ENCODE measurements at regions of chr20 and their contacts with region 1.

Region 1: DNA sequence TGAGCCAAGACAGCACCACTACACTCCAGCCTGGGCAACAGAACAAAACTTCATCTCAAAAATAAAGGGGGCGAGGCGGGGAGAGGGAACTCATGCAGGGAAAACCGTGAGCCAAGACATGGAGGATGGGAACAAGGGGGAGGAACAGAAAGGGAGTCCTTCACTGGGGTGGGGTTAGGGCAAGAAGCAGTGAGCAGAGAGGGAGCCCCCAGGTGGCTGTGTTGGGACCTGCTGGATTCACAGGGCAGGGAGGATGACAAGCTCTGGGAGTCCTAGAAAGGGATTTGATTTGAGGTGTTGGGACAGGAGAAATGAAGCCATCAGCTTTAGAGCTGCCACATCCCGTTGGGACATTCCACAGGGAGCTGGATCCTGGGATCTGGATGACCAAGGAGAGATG is 90.6 kb upstream of the TOP1 start:
- DNase-seq: no peak
- ATAC-seq: no peak
- H3K4me3 ChIP-seq: no peak overlapping the region
- H3K27ac ChIP-seq: no peak overlapping the region
- H3K4me1 ChIP-seq: no peaks in the 10 kb centered on the region
- H3K27me3 ChIP-seq: no peaks in the 10 kb centered on the region
- CTCF ChIP-seq: no peak
- POLR2A ChIP-seq: no peak

Region 2: DNA sequence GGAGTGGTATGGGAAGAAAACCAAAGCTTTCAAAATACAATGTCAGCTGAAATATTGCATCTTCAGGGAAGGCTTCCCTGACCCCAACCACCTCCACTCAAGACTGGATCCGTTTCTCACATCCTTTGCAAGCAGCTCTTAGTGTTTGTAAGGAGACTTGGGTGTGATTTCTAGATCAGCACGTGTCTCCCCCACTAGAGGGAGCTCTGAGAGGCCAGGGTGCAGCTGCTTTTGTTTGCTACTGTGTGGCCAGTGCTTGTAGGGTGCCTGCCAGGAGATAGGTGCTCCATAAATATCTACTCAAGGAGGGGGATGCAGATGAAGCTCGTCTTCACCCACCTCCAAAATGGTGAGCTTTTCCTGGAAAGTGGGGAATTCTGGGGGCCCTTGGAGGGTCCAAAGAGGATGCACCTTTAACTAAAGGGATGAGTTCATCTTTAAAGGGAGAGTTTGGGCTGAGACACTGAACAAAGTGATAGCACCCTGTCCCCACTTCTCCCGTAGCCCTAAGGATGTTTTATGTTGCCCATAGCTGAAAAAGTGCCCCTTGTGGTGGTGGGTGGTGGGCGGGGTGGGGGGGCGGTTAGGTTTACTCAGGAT is 196.4 kb before region 1 on chr20:
- intact Hi-C with region 1: loop called in 2 of 10 experiments (anchors 5 to 10 kb)
- DNase-seq: peak in 3 of 5 donors; percentile 26 to 44 (median 43)
- ATAC-seq: peak in 1 of 4 donors; percentile 42
- H3K4me3 ChIP-seq: no peak overlapping the region
- H3K27ac ChIP-seq: no peak overlapping the region
- H3K4me1 ChIP-seq: no peaks in the 10 kb centered on the region
- H3K27me3 ChIP-seq: peaks cover 0 to 11% (median 0%) of the 10 kb centered on the region in 9 donors
- CTCF ChIP-seq: peak; percentile 41 to 75 (median 56)
- POLR2A ChIP-seq: no peak

Region 3: DNA sequence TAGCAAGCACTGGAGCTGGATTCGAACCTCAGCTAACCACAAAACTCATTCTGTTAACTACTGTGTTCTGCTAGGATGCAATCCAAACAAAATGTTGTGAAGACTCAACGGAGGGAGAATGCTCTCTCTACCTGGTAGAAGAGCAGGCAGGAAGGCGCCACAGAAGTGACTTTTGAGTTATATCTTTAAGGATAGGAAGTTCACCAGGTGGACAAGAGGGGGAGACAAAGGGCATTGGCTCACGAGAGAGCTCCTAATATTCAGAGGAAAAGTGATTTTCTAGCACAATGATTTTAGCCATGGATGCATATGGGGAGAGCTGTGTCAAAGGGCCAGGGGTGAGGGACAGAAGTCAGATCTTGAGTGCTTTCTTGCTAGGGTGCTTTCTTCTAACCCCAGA is 140.6 kb before region 1 on chr20:
- intact Hi-C with region 1: loop called in 4 of 10 experiments (anchors 5 to 10 kb)
- DNase-seq: no peak
- ATAC-seq: no peak
- H3K4me3 ChIP-seq: no peak overlapping the region
- H3K27ac ChIP-seq: no peak overlapping the region
- H3K4me1 ChIP-seq: no peaks in the 10 kb centered on the region
- H3K27me3 ChIP-seq: peaks cover 0 to 4% (median 0%) of the 10 kb centered on the region in 9 donors
- CTCF ChIP-seq: peak in 9 of 12 donors; percentile 15 to 52 (median 33)
- POLR2A ChIP-seq: no peak

Region 4: GRCh38 chr20:40806929-40807820 is 130.8 kb before region 1 on chr20:
- intact Hi-C with region 1: loop called in 1 of 10 experiments (anchors 10 kb)
- DNase-seq: no peak
- ATAC-seq: no peak
- H3K4me3 ChIP-seq: no peak overlapping the region
- H3K27ac ChIP-seq: no peak overlapping the region
- H3K4me1 ChIP-seq: no peaks in the 10 kb centered on the region
- H3K27me3 ChIP-seq: peaks cover 0 to 33% (median 0%) of the 10 kb centered on the region in 9 donors
- CTCF ChIP-seq: no peak
- POLR2A ChIP-seq: no peak

Region 5: GRCh38 chr20:40896814-40897700 is 41.0 kb before region 1 on chr20:
- intact Hi-C with region 1: no loop called
- DNase-seq: no peak
- ATAC-seq: no peak
- H3K4me3 ChIP-seq: no peak overlapping the region
- H3K27ac ChIP-seq: no peak overlapping the region
- H3K4me1 ChIP-seq: peaks cover 0 to 14% (median 0%) of the 10 kb centered on the region in 12 donors
- H3K27me3 ChIP-seq: peaks cover 0 to 11% (median 0%) of the 10 kb centered on the region in 9 donors
- CTCF ChIP-seq: no peak
- POLR2A ChIP-seq: no peak